A673 (cell line): ENCODE measurements at regions of chr11 and their contacts with region 1.

Region 1: DNA sequence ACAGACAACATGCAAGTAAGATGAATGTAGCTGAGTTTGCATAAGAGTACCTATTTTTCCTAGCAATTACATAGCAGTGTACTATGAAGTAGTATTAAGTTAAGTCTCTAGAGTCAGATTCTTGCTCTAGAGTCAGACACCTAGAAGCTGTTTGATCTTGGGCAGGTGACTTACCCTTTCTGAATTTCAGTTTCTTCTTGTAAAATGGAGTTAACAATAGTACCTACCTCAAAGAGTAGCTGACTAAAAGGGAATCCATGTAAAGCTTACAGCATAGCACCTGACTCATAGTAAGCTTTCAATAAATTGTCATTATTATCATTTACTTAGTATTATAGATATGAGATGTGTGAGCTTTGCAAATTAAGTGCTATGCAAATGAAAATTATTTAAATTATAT is 47.8 kb upstream of the PTPRJ start:
- DNase-seq: no peak
- H3K4me3 ChIP-seq: no peak overlapping the region
- H3K27ac ChIP-seq: no peak overlapping the region
- H3K4me1 ChIP-seq: no peaks in the 10 kb centered on the region
- H3K27me3 ChIP-seq: no peaks in the 10 kb centered on the region
- CTCF ChIP-seq: no peak

Region 2: DNA sequence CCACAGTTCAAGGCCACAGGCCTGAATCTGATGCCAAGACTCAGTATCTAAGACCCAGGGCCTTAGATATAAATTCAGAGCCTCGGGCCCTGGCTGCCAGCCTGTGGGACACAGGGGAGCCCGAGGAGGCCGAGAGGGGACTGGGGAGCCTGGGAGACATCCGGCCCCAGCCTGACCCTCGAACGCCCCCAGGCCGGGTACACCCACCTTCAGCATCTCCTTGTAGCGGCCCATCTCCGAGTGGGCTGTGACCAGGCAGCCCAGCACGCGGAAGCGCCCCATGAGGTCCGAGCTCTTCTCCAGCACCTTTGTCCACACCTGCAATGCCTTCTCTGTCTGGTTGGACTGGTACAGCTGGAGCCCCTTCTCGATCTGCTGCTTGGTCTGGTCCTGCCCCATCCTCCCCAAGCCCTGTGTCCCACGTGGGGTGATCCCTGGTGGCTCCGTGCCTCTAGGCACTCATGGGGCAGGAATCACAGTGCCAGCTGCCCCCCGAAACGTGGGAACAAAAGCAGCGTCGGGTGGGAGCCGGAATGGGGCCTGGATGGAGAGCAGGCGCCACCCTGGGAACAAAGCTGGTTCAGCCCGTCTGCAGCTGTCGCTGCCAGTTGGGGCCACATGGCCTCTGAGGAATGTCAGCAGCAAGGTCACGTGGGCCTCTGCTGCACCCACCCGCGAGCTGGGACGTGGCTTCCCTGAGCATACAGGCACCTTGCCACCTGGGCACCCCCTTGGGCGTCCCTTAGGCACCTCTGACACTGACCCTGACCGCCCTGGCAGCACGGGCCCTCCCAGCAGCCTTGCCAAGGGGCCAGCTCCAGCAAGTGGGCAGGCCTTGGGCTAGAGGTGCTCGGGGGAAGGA is 483.7 kb before region 1 on chr11 and contains the start of gene RAPSN:
- CTCF ChIA-PET with region 1: no interaction called
- POLR2A ChIA-PET with region 1: interaction called, 17 read pairs
- intact Hi-C with region 1: no loop called
- DNase-seq: no peak
- H3K4me3 ChIP-seq: no peak within 1 kb of the TSS
- H3K27ac ChIP-seq: no peak within 1 kb of the TSS
- H3K4me1 ChIP-seq: no peaks in the 10 kb centered on the region
- H3K27me3 ChIP-seq: no peaks in the 10 kb centered on the region
- CTCF ChIP-seq: no peak
- total RNA-seq, gene RAPSN: 1.0 TPM in 2 replicates

Region 3: DNA sequence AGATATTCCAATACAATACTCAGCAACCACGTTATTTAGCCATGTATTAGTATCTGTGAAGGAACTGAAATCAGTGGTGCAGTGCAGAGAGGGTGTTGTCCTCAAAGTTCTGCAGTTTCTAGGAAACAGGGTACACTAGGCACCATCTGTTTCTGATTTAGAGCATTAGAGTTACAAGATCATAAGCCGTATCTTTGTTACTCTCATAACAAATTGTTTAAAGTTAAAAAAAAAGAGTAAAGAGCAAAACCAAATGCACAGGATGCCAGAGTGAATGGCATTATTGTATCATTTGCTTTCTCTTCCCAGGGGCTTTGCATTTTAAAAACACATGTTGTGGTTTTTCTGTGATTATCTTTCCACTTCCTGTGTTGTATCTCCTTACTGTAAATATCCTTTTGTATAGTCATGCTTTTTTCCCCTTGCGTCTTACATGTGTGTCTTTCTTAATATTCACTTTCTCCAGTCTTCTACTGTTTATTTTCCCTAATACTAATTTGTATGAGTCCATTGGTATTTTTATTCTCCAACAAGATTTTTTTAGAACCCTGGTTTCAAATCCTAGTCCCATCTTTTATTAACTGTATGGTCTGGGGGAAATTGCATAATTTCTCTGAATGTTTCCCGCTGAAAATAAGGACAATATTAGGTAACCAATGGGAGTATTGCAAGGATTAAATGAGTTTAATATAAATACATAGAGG is 69.2 kb before region 1 on chr11:
- CTCF ChIA-PET with region 1: no interaction called
- POLR2A ChIA-PET with region 1: interaction called, 5 read pairs
- intact Hi-C with region 1: loop called (anchors 1 kb)
- DNase-seq: peak; percentile 98
- H3K4me3 ChIP-seq: no peak overlapping the region
- H3K27ac ChIP-seq: peak overlapping the region; percentile 83
- H3K4me1 ChIP-seq: peaks cover 56% of the 10 kb centered on the region
- H3K27me3 ChIP-seq: no peaks in the 10 kb centered on the region
- CTCF ChIP-seq: no peak

Region 4: DNA sequence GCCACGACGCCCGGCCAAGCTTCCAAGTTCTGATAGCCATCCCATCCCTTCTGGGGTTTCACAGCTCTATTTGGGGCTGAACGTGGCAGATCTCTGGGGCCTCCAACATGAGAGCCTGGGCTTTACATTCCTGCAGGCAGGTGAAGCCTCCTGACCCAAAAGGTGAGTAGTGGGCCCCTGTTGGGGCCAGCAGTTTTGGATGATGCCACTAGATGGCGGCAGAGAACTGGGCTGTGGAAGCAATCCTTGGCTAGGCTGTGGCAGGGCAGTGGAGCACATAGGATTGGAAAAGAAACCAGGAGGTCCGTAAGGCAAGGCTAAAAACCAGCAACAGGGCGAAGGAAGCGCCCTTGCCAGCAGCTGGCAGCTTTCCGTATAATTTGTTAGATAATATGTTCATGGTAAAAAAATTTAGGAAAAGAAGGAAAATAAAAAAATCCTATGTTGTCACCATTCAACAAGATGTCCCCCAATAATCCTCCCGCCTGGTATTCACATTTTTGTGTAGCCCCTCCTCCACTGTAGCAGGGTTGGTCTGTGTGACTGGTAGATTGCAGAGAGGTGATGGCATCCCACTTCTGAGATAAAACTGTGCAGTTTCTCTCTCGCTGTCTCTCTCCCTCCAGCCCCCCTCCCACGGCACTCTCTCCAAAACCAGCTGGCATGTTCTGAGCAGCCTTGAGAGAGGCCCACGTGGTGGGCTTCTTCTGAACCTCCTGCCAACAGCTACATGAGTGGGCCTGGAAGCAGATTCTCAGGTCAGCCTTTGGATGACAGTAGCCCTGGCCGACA is 240.5 kb after region 1 on chr11:
- CTCF ChIA-PET with region 1: no interaction called
- POLR2A ChIA-PET with region 1: no interaction called
- intact Hi-C with region 1: loop called (anchors 2 kb)
- DNase-seq: peak; percentile 88
- H3K4me3 ChIP-seq: peak overlapping the region; percentile 0
- H3K27ac ChIP-seq: no peak overlapping the region
- H3K4me1 ChIP-seq: no peaks in the 10 kb centered on the region
- H3K27me3 ChIP-seq: no peaks in the 10 kb centered on the region
- CTCF ChIP-seq: peak; percentile 100

Region 5: DNA sequence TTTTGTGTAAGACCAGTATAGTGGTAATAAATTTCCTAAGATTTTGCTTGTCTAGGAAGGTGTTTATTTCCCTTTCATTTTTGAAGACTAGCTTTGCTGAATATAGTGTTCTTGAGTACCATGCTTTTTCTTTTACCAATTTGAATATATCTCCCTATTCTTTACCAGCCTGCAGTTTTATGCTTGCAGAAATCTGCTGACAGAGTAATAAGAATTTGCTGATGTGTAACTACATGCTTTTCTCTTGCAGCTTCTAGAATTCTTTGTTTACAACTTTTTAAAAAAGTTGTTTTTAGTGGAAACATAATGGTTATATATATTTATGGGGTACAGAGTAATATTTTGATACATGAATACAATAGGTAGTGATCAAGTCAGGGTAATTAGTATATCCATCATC is 1600.7 kb after region 1 on chr11:
- CTCF ChIA-PET with region 1: no interaction called
- POLR2A ChIA-PET with region 1: no interaction called
- intact Hi-C with region 1: loop called (anchors 10 kb)
- DNase-seq: no peak
- H3K4me3 ChIP-seq: no peak overlapping the region
- H3K27ac ChIP-seq: no peak overlapping the region
- H3K4me1 ChIP-seq: no peaks in the 10 kb centered on the region
- H3K27me3 ChIP-seq: no peaks in the 10 kb centered on the region
- CTCF ChIP-seq: no peak